PC-3 (cell line): ENCODE measurements at regions of chrX and their contacts with region 1.

Region 1: GRCh38 chrX:108091266-108091877 is at the starts of genes ATG4A and PSMD10:
- DNase-seq: peak; percentile 96
- ATAC-seq: peak; percentile 90
- H3K4me3 ChIP-seq: peak within 1 kb of the TSS; percentile 87
- H3K27ac ChIP-seq: peak within 1 kb of the TSS; percentile 60
- H3K4me1 ChIP-seq: 0 out of 2 replicates have a peak, but pooled peaks cover 8% of the 10 kb centered on the region
- H3K27me3 ChIP-seq: no peaks in the 10 kb centered on the region
- CTCF ChIP-seq: no peak
- total RNA-seq, gene ATG4A: 15.0 and 21.0 TPM in 2 replicates
- total RNA-seq, gene PSMD10: 88.2 and 102 TPM in 2 replicates

Region 2: GRCh38 chrX:107118322-107119147 is 972.8 kb before region 1 on chrX and contains the start of gene RBM41:
- CTCF ChIA-PET with region 1: no interaction called
- POLR2A ChIA-PET with region 1: no interaction called
- intact Hi-C with region 1: loop called (anchors 5 kb)
- DNase-seq: peak; percentile 84
- ATAC-seq: peak; percentile 99
- H3K4me3 ChIP-seq: peak within 1 kb of the TSS; percentile 92
- H3K27ac ChIP-seq: no peak within 1 kb of the TSS; the same call in 1 of the 2 replicates
- H3K4me1 ChIP-seq: peaks cover 13% of the 10 kb centered on the region
- H3K27me3 ChIP-seq: no peaks in the 10 kb centered on the region
- CTCF ChIP-seq: no peak
- total RNA-seq, gene RBM41: 12.8 and 14.2 TPM in 2 replicates

Region 3: DNA sequence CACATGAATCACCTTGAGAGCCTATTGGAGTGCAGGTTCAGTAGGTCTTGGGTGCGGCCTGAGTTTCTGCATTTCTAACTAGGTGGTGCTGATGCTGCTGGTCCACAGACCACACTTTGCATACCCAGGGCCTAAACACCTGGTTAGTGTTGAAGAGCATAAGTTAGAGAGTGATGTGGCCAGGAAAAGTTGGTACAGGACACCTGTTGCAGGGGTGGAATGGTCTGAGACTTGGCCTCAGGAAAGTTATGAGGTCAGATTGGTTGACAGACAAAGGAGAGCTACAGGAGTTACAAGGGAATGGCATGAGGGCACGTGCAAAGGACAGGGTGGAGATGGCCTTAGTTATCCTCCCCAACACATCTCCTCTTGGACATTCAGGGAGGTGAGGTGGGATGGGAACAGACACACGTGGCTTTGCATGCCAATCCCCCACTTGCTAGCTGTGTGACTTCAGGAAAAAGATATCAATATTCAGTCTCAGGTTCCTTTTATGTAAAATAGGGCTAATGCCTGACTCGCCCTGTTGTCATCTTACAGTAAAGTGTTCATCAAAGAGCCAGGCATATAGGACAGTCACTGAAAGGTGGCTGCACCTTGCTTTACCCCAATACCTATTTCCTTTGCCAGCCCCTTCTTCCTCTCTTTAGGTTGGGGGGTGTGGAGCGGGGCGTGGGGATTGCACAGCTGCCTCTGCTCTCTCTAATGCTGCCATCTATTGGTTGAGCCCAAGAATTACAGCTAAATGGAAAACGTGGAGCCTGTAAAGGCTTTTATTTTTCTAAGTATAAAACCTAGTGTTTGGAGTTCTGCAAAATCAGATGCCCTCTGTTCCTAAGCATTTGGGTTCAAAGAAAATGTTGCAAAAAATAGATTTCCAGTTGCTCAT is 47.7 kb after region 1 on chrX:
- CTCF ChIA-PET with region 1: interaction called, 3 read pairs
- POLR2A ChIA-PET with region 1: interaction called, 3 read pairs
- intact Hi-C with region 1: loop called (anchors 2 kb)
- DNase-seq: peak; percentile 35
- ATAC-seq: peak; percentile 74
- H3K4me3 ChIP-seq: no peak overlapping the region
- H3K27ac ChIP-seq: no peak overlapping the region
- H3K4me1 ChIP-seq: 0 out of 2 replicates have a peak, but pooled peaks cover 3% of the 10 kb centered on the region
- H3K27me3 ChIP-seq: no peaks in the 10 kb centered on the region
- CTCF ChIP-seq: peak; percentile 65